ENCODE measurements at regions of chr2 and their contacts with region 1.

Region 1: GRCh38 chr2:230614913-230615332 is 97.7 kb upstream of the CAB39 start:
- DNase-seq: peak; percentile 84
- ATAC-seq: peak; percentile 85
- H3K4me3 ChIP-seq: peak overlapping the region in 2 of 5 experiments; percentile 12 to 18
- H3K4me3 Mint-ChIP-seq: peak overlapping the region; percentile 75
- H3K27ac ChIP-seq: peak overlapping the region; percentile 0 to 46
- H3K27ac Mint-ChIP-seq: peak overlapping the region; percentile 86
- H3K4me1 ChIP-seq: peaks cover 27 to 42% of the 10 kb centered on the region in 2 donors
- H3K4me1 Mint-ChIP-seq: peaks cover 42% of the 10 kb centered on the region
- H3K27me3 ChIP-seq: no peaks in the 10 kb centered on the region
- H3K27me3 Mint-ChIP-seq: no peaks in the 10 kb centered on the region
- CTCF ChIP-seq: no peak

Region 2: DNA sequence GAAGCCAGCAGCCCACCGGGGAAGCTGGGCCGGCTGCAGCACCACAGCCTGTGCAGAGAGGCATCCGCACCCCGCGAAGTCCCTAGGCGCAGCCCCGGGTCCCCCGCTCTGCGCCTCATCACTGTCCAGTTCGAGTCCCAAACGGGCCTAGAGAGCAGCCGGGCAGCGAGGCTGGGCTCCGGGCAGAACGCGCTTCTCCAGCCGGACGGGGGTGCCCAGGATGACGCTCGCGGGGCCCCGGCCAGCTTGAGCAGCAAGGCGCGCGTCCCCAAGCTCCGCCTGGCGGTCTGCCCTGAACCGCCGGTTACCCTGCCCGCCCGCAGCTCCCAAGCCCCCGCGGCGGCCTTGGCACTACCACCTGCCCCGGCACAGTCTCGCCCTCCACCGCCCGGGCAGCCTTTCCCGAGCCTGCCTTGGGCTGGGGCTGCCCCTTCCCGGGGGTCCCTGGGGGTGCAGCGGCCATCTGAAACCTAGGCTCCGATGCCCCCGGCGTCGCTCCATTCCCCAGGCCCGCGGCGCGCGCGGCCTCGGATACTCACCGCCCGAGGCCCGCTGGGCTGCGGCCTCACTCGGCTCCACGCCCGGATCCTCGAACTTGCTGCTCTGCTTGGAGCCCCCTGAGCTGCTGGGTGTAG is 546.8 kb before region 1 on chr2:
- CTCF ChIA-PET with region 1: interaction called, 4 read pairs
- POLR2A ChIA-PET with region 1: no interaction called
- intact Hi-C with region 1: loop called (anchors 2 kb)
- DNase-seq: peak; percentile 75
- ATAC-seq: peak; percentile 34
- H3K4me3 ChIP-seq: peak overlapping the region; percentile 47 to 76 (median 67)
- H3K4me3 Mint-ChIP-seq: peak overlapping the region; percentile 96
- H3K27ac ChIP-seq: no peak overlapping the region
- H3K27ac Mint-ChIP-seq: peak overlapping the region; percentile 83
- H3K4me1 ChIP-seq: peaks cover 8 to 18% of the 10 kb centered on the region in 2 donors
- H3K4me1 Mint-ChIP-seq: peaks cover 20% of the 10 kb centered on the region
- H3K27me3 ChIP-seq: peaks cover 0 to 9% (median 2%) of the 10 kb centered on the region in 4 experiments
- H3K27me3 Mint-ChIP-seq: peaks cover 13% of the 10 kb centered on the region
- CTCF ChIP-seq: no peak

Region 3: DNA sequence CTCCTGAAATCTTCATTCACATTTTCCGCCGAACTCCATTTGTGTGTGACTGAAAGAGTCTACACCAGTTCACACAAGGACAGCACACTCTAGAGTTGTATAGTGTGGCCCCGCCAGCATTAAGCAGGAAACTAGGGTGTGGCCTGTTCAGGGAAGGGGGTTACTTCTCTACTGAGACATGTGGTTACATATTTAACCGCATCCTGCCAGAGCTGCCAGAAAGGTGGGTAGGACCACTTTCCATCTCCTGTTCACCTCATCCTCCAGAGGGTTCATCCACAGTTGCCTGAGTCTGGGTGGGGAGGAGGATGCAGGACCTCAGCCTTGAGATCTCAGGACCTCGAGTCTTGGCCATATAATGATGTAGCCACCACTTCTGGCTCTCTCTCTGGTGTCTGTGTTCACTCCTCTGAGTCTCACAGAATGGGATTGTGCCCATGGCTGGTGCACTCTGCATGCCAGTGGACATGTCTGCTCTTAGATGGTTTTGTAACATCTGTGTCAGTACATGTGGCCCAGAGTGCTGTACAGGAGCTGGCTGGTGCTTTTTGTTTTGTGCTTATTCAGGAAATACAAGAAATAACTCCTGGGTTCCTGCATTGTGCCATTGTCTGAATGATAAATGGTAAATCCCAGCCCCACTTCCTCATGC is 295.6 kb before region 1 on chr2:
- CTCF ChIA-PET with region 1: interaction called, 4 read pairs
- POLR2A ChIA-PET with region 1: no interaction called
- intact Hi-C with region 1: loop called (anchors 5 kb)
- DNase-seq: peak; percentile 78
- ATAC-seq: peak; percentile 84
- H3K4me3 ChIP-seq: peak overlapping the region in 4 of 5 experiments; percentile 6 to 47 (median 21)
- H3K4me3 Mint-ChIP-seq: peak overlapping the region; percentile 69
- H3K27ac ChIP-seq: peak overlapping the region; percentile 79 to 86
- H3K27ac Mint-ChIP-seq: peak overlapping the region; percentile 92
- H3K4me1 ChIP-seq: peaks cover 41 to 63% of the 10 kb centered on the region in 2 donors
- H3K4me1 Mint-ChIP-seq: peaks cover 76% of the 10 kb centered on the region
- H3K27me3 ChIP-seq: no peaks in the 10 kb centered on the region
- H3K27me3 Mint-ChIP-seq: no peaks in the 10 kb centered on the region
- CTCF ChIP-seq: no peak

Region 4: DNA sequence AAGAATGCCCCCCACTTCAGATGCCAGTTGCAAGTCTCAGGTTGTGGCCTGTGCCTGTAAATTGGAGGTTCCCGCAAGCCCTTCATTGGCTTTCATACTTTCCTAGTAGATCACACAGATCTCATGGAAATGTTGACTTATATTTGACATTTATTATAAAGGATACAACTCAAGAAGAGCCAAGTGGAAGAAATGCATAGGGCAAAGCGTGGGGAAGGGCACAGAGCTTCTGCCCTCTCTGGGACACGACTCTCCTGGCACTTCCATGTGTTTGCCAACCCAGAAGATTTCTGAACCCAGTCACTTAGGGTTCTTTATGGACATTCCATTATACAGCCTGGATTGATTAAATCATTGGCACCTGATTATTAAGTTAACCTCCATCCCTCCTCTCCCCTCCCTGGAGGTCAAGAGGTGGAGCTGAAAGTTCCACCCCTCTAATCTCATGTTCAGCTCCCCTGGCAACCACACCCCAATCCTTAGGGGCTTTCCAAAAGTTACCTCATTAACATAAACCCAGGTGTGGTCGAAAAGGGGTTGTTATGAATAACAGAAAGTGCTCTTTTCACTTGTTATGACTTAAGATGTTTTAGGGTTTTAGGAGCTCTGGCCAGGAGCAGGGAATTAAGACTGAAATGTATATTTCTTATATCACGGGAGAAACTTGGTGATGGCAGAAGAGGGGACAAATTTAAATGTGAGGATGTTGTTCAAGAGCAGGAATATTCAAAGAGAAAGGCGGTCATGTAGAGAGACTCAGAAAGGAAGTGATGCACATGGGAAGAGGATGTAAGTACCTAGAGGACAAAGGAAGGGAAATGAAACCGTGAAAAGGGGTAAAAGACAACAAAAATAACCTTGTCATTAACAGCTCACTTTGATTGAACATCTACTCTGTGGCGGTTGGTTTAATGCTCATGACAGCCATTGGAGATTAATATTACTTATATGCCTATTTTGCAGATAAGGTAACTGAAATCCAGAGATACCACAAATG is 167.2 kb before region 1 on chr2:
- CTCF ChIA-PET with region 1: no interaction called
- POLR2A ChIA-PET with region 1: interaction called, 4 read pairs
- intact Hi-C with region 1: loop called (anchors 2 kb)
- DNase-seq: peak; percentile 92
- ATAC-seq: peak; percentile 84
- H3K4me3 ChIP-seq: peak overlapping the region in 3 of 5 experiments; percentile 0 to 39 (median 7)
- H3K4me3 Mint-ChIP-seq: peak overlapping the region; percentile 84
- H3K27ac ChIP-seq: peak overlapping the region; percentile 98 to 99
- H3K27ac Mint-ChIP-seq: peak overlapping the region; percentile 97
- H3K4me1 ChIP-seq: peaks cover 79 to 84% of the 10 kb centered on the region in 2 donors
- H3K4me1 Mint-ChIP-seq: peaks cover 84% of the 10 kb centered on the region
- H3K27me3 ChIP-seq: no peaks in the 10 kb centered on the region
- H3K27me3 Mint-ChIP-seq: no peaks in the 10 kb centered on the region
- CTCF ChIP-seq: no peak

Region 5: GRCh38 chr2:230537531-230537976 is 77.4 kb before region 1 on chr2:
- CTCF ChIA-PET with region 1: interaction called, 5 read pairs
- POLR2A ChIA-PET with region 1: no interaction called
- intact Hi-C with region 1: loop called (anchors 5 kb)
- DNase-seq: peak; percentile 43
- ATAC-seq: peak; percentile 79
- H3K4me3 ChIP-seq: no peak overlapping the region
- H3K4me3 Mint-ChIP-seq: peak overlapping the region; percentile 75
- H3K27ac ChIP-seq: peak overlapping the region in 1 of 2 donors; percentile 53
- H3K27ac Mint-ChIP-seq: peak overlapping the region; percentile 87
- H3K4me1 ChIP-seq: peaks cover 19 to 23% of the 10 kb centered on the region in 2 donors
- H3K4me1 Mint-ChIP-seq: peaks cover 49% of the 10 kb centered on the region
- H3K27me3 ChIP-seq: no peaks in the 10 kb centered on the region
- H3K27me3 Mint-ChIP-seq: no peaks in the 10 kb centered on the region
- CTCF ChIP-seq: no peak

Region 6: DNA sequence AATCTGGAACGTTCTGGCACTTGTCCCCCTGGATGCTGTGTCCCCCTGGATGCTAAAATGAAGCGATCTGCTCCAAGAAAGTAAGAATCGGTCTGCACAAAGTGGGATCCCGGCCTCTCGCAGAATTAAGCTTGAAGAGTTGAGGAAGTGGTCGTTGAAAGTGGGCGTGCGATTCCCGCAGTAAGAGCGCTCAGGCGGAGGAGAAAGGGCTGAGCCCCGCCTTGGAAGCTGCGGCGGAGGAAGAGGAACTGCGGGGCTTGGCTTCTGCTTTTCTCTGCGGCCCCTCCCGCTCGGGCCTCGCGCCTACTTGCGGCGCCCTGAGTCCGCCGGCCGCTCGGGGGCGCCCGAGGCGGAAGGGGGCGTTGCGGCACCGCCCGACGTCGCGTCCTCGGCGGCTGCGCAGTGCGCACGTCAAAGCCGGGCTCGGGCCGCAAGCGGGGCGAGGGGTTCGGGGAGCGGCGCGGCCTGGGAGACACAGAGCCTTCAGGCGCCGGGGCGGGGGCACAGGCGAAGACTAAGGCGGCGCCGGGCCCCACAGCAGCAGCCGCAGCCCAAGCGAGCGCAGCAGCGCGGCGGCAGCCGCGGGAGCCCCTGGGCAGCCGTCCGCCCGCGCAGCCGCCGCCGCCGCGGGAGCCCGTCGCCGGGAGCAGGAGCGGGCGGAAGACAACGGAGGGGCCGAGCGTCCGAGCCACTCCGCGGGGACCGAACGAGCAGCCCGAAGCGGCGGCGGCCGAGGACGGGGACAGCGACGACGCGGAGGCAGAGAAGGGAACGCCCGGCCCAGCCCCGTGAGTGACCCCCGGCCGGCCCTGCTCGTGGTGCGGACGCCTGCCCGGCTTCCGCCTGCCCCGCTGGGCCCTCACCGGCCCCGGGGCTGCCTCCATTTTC is 97.8 kb after region 1 on chr2 and contains the start of gene CAB39:
- CTCF ChIA-PET with region 1: interaction called, 6 read pairs
- POLR2A ChIA-PET with region 1: interaction called, 4 read pairs
- intact Hi-C with region 1: loop called (anchors 1 kb)
- DNase-seq: peak; percentile 96
- ATAC-seq: peak; percentile 91
- H3K4me3 ChIP-seq: peak within 1 kb of the TSS; percentile 68 to 89 (median 78)
- H3K4me3 Mint-ChIP-seq: peak within 1 kb of the TSS; percentile 93
- H3K27ac ChIP-seq: peak within 1 kb of the TSS; percentile 59 to 84
- H3K27ac Mint-ChIP-seq: peak within 1 kb of the TSS; percentile 94
- H3K4me1 ChIP-seq: peaks cover 41% of the 10 kb centered on the region in 2 donors
- H3K4me1 Mint-ChIP-seq: peaks cover 48% of the 10 kb centered on the region
- H3K27me3 ChIP-seq: no peaks in the 10 kb centered on the region
- H3K27me3 Mint-ChIP-seq: no peaks in the 10 kb centered on the region
- CTCF ChIP-seq: peak; percentile 83
- total RNA-seq, gene CAB39: 72.5 and 75.7 TPM in 2 replicates

Region 7: DNA sequence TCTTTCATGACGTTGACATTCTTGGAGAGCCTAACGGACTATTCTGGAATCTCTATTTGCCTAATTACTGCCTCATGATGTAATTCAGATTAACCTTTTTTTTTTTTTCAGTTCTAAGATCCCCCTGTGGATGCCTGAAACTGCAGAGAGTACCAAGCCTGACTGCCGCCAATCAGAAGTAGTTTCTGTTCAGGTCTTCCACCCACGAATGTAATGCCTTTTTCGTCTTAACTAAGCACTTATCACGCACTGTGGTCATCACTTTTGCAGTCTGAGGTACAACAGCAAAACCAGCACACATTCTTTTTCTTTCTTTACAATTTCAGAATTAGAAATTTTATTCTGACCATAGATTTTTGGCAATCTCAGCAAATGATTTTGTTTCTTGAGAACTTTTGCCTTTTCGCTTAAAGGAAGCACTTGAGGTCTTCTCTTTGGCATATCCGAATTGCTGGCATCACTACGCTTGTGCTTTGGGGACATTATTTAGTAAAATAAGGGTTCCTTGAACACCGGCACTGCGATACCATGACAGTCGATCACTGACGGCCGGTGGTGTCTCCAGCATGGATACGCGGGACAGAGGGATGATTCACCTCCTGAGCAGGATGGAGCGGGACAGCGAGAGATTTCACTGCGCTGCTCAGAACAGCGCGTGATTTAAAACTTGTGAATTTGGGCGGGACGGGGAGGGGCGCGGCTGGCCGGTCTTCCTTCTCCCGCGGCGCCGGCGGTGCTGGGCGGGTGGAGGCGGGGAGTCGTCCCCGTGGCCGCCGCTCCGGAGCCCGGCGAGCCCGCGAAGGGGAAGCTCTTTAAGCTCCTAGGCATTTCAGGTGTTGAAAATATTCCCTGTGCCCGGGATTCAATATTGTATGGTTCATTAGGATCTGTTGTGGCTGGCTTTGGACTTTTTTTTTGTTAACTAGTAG is 342.2 kb after region 1 on chr2:
- CTCF ChIA-PET with region 1: no interaction called
- POLR2A ChIA-PET with region 1: no interaction called
- intact Hi-C with region 1: no loop called
- DNase-seq: peak; percentile 50
- ATAC-seq: peak; percentile 49
- H3K4me3 ChIP-seq: peak overlapping the region in 4 of 5 experiments; percentile 15 to 55 (median 31)
- H3K4me3 Mint-ChIP-seq: peak overlapping the region; percentile 82
- H3K27ac ChIP-seq: no peak overlapping the region
- H3K27ac Mint-ChIP-seq: no peak overlapping the region
- H3K4me1 ChIP-seq: peaks cover 12 to 16% of the 10 kb centered on the region in 2 donors
- H3K4me1 Mint-ChIP-seq: peaks cover 10% of the 10 kb centered on the region
- H3K27me3 ChIP-seq: peaks cover 2 to 38% (median 29%) of the 10 kb centered on the region in 4 experiments
- H3K27me3 Mint-ChIP-seq: peaks cover 53% of the 10 kb centered on the region
- CTCF ChIP-seq: no peak